PC-9 (cell line): ENCODE measurements at regions of chr17 and their contacts with region 1.

Region 1: DNA sequence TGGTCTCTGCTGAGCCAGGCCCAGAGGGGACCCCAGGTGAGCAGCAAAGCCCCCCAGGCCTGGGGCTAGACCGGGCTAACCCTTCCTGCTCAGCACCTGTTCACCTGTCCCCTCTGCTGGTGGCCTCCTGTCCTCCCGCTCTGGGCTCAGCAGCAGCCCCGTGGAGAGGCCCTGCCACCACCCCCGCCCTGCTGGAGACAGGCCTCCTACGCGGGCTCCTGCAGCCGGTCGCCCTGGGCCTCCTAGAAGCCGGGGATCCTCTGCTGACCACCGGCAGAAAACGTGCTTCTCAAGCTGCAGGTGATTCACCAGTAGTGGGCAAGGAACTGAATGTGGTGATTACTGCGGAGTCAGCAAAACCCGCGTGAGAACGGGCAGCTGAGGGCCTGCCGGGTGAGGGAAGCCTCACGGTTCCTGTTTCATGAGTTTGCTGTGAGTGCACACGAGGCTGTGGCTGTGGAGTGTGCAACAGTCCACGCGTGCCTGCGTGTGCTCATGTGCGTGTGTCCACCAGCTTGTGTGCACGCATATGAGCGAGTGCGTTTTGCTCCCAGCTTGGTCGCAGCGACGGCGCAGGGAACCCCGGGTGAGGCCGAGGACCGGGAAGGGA is 792 bp downstream of the SECTM1 start:
- DNase-seq: peak; percentile 44 to 47
- H3K4me3 ChIP-seq: peak overlapping the region; percentile 58
- H3K27ac ChIP-seq: no peak overlapping the region
- H3K4me1 ChIP-seq: peaks cover 4% of the 10 kb centered on the region; the same call in 1 of the 2 replicates
- H3K27me3 ChIP-seq: no peaks in the 10 kb centered on the region
- CTCF ChIP-seq: no peak

Region 2: GRCh38 chr17:81977211-81978027 is 355.4 kb before region 1 on chr17 and contains the start of gene ASPSCR1:
- CTCF ChIA-PET with region 1: no interaction called
- POLR2A ChIA-PET with region 1: no interaction called
- intact Hi-C with region 1: no loop called
- DNase-seq: peak; percentile 49 to 92
- H3K4me3 ChIP-seq: peak within 1 kb of the TSS; percentile 62
- H3K27ac ChIP-seq: peak within 1 kb of the TSS; percentile 57; the same call in 1 of the 2 replicates
- H3K4me1 ChIP-seq: peaks cover 29% of the 10 kb centered on the region
- H3K27me3 ChIP-seq: no peaks in the 10 kb centered on the region
- CTCF ChIP-seq: no peak
- total RNA-seq, gene ASPSCR1: 54.9 and 80.0 TPM in 2 replicates

Region 3: GRCh38 chr17:82241183-82241925 is 91.4 kb before region 1 on chr17:
- CTCF ChIA-PET with region 1: interaction called, 3 read pairs
- POLR2A ChIA-PET with region 1: no interaction called
- intact Hi-C with region 1: loop called (anchors 5 kb)
- DNase-seq: peak in 1 of 2 experiments; percentile 79
- H3K4me3 ChIP-seq: no peak overlapping the region
- H3K27ac ChIP-seq: no peak overlapping the region
- H3K4me1 ChIP-seq: peaks cover 10% of the 10 kb centered on the region
- H3K27me3 ChIP-seq: no peaks in the 10 kb centered on the region
- CTCF ChIP-seq: no peak

Region 4: DNA sequence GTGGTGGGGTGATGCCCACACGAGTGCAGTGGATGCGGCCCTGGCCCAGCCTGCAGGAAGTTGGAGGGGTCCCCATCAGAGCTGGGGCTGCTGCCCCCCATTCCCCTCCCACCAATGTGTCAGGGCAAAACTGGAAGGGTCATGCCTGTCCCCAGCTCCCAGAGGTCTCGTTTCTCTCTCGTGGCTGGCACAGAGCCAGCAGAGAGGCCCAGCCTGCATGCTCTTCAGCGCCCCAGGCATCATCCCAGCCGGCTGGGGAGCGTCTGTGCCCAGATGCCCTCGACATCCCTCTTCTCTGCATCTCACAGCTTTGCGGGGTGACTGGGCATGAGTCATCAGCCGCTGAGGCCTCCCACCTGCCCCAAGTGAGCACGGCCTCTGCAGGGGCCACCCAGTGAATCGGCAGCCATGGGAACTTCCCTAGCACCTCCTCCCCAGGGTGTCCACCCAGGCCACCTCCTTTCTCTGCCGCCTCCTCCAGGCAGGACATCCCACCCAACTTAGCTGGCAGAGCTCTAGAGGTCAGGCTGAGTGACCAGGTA is 49.5 kb before region 1 on chr17:
- CTCF ChIA-PET with region 1: no interaction called
- POLR2A ChIA-PET with region 1: no interaction called
- intact Hi-C with region 1: loop called (anchors 10 kb)
- DNase-seq: peak; percentile 82 to 92
- H3K4me3 ChIP-seq: no peak overlapping the region
- H3K27ac ChIP-seq: peak overlapping the region; percentile 90
- H3K4me1 ChIP-seq: peaks cover 52% of the 10 kb centered on the region
- H3K27me3 ChIP-seq: no peaks in the 10 kb centered on the region
- CTCF ChIP-seq: no peak

Region 5: GRCh38 chr17:82292251-82293154 is 40.3 kb before region 1 on chr17:
- CTCF ChIA-PET with region 1: no interaction called
- POLR2A ChIA-PET with region 1: interaction called, 10 read pairs
- intact Hi-C with region 1: loop called (anchors 10 kb)
- DNase-seq: peak; percentile 91 to 93
- H3K4me3 ChIP-seq: peak overlapping the region; percentile 64
- H3K27ac ChIP-seq: peak overlapping the region; percentile 64
- H3K4me1 ChIP-seq: peaks cover 32% of the 10 kb centered on the region
- H3K27me3 ChIP-seq: no peaks in the 10 kb centered on the region
- CTCF ChIP-seq: no peak